ENCODE measurements at regions of chr2 and their contacts with region 1.

Region 1: DNA sequence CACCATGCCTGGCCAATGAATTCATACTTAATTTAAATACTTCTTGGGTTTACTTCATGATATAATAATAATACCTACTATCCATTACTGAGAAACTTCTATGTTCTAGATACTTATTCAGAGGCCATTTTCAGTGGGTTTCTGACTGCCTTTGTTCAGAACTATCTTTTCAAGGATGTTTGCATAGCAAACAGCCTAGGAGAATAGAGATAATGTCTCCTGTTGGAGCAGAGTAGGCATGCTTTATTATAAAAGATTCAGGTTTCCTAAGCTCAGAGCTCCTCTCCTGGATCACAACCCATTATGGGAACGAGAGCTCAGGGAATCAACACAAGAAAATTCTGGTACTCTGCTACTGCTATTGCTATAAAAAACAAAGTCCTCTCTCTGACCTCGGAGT is 11.1 kb downstream of the FASTKD1 start:
- DNase-seq: no peak
- ATAC-seq: peak in 2 of 3 donors; percentile 40 to 55
- H3K4me3 ChIP-seq: no peak overlapping the region
- H3K4me3 Mint-ChIP-seq: peak overlapping the region; percentile 9
- H3K27ac ChIP-seq: no peak overlapping the region
- H3K27ac Mint-ChIP-seq: peak overlapping the region in 1 of 2 donors; percentile 34
- H3K4me1 ChIP-seq: no peaks in the 10 kb centered on the region
- H3K4me1 Mint-ChIP-seq: no peaks in the 10 kb centered on the region
- H3K27me3 ChIP-seq: no peaks in the 10 kb centered on the region
- H3K27me3 Mint-ChIP-seq: no peaks in the 10 kb centered on the region
- CTCF ChIP-seq: no peak

Region 2: GRCh38 chr2:168976034-168976654 is 586.4 kb before region 1 on chr2:
- intact Hi-C with region 1: loop called (anchors 5 kb)
- DNase-seq: no peak
- ATAC-seq: peak in 1 of 3 donors; percentile 17
- H3K4me3 ChIP-seq: no peak overlapping the region
- H3K4me3 Mint-ChIP-seq: no peak overlapping the region
- H3K27ac ChIP-seq: no peak overlapping the region
- H3K27ac Mint-ChIP-seq: no peak overlapping the region
- H3K4me1 ChIP-seq: no peaks in the 10 kb centered on the region
- H3K4me1 Mint-ChIP-seq: peaks cover 0 to 5% of the 10 kb centered on the region in 2 donors
- H3K27me3 ChIP-seq: no peaks in the 10 kb centered on the region
- H3K27me3 Mint-ChIP-seq: no peaks in the 10 kb centered on the region
- CTCF ChIP-seq: no peak

Region 3: GRCh38 chr2:169462896-169463695 is 99.4 kb before region 1 on chr2:
- intact Hi-C with region 1: loop called (anchors 5 kb)
- DNase-seq: no peak
- ATAC-seq: peak in 2 of 3 donors; percentile 21 to 30
- H3K4me3 ChIP-seq: no peak overlapping the region
- H3K4me3 Mint-ChIP-seq: no peak overlapping the region
- H3K27ac ChIP-seq: no peak overlapping the region
- H3K27ac Mint-ChIP-seq: peak overlapping the region in 1 of 2 donors; percentile 41
- H3K4me1 ChIP-seq: no peaks in the 10 kb centered on the region
- H3K4me1 Mint-ChIP-seq: peaks cover 0 to 4% of the 10 kb centered on the region in 2 donors
- H3K27me3 ChIP-seq: no peaks in the 10 kb centered on the region
- H3K27me3 Mint-ChIP-seq: no peaks in the 10 kb centered on the region
- CTCF ChIP-seq: no peak

Region 4: DNA sequence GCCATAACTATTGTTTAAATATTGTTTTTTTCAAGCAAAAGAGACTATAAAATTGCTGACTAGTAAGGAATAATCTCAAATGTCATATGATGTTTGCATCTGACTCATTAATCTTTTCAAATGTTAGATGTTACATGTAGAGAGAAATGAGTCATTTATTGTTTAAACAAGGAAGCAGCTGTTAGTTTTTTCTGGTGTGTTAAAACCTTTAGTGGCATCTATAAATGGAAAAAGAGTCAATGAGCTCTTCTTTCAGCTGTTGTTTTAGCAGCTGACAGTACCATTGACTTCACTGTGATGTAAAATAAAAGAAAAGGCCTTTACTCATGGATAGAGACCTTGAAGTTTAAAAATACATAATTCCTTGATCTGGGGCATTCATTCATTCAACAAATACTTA is 54.8 kb before region 1 on chr2:
- intact Hi-C with region 1: no loop called
- DNase-seq: no peak
- ATAC-seq: no peak
- H3K4me3 ChIP-seq: no peak overlapping the region
- H3K4me3 Mint-ChIP-seq: no peak overlapping the region
- H3K27ac ChIP-seq: no peak overlapping the region
- H3K27ac Mint-ChIP-seq: no peak overlapping the region
- H3K4me1 ChIP-seq: no peaks in the 10 kb centered on the region
- H3K4me1 Mint-ChIP-seq: no peaks in the 10 kb centered on the region
- H3K27me3 ChIP-seq: no peaks in the 10 kb centered on the region
- H3K27me3 Mint-ChIP-seq: peaks cover 0 to 3% of the 10 kb centered on the region in 2 donors
- CTCF ChIP-seq: no peak